ENCODE measurements at regions of chr20 and their contacts with region 1.

Region 1: GRCh38 chr20:44382641-44383040 is 27.1 kb downstream of the HNF4A start:
- DNase-seq: no peak
- ATAC-seq: no peak
- H3K4me3 ChIP-seq: no peak overlapping the region
- H3K27ac ChIP-seq: no peak overlapping the region
- H3K4me1 ChIP-seq: peaks cover under 1% of the 10 kb centered on the region; the same call in 1 of the 2 replicates
- H3K27me3 ChIP-seq: no peaks in the 10 kb centered on the region
- CTCF ChIP-seq: no peak

Region 2: DNA sequence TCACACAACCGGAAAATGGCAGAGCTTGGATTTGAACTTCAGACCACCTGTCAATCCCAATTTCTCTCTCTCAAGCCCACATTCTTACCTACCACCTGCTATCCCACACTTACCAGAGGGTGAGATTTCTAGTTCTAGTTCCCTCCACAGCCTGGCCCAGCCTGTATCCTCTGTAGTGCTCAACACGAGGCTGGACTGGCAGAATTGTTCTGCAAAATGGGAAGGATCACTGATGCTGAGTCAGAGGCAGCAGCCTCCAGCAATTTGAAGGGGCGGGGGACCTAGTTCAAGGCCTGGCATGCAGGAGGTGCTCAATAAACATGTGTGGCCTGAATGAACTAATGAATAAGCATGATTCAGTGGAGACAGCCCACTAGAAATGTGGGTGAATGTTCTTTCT is 39.4 kb after region 1 on chr20:
- CTCF ChIA-PET with region 1: no interaction called
- POLR2A ChIA-PET with region 1: no interaction called
- in situ Hi-C with region 1: no loop called
- intact Hi-C with region 1: no loop called
- DNase-seq: no peak
- ATAC-seq: no peak
- H3K4me3 ChIP-seq: no peak overlapping the region
- H3K27ac ChIP-seq: no peak overlapping the region
- H3K4me1 ChIP-seq: no peaks in the 10 kb centered on the region
- H3K27me3 ChIP-seq: no peaks in the 10 kb centered on the region; the same call in 1 of the 2 replicates
- CTCF ChIP-seq: no peak

Region 3: DNA sequence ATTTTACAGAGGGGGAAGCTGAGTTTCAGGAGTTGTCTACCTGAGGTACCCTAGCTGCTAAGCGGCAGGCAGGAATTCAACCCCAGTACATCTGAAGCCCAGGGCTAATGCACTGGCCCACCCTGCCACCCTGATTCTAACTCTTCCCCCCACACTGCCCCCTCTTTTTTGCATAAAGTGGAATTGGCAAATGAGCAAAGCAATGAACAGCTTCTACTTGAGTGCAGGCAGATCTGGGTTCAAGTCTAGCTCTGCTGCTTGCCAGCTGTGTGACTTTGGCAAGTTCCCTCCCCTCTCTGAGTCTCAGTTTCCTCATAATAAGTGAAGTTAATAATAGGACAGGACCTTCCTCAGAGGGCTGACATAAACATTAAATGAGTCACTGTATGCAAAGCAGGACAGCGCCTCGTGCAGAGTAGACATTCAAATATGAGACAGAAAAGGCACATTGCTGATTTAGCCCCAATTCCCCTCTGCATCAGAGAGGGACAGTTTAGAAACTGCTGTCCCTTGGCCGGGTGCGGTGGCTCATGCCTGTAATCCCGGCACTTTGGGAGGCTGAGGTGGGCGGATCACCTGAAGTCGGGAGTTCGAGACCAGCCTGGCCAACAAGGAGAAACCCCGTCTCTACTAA is 264.1 kb after region 1 on chr20:
- CTCF ChIA-PET with region 1: interaction called, 11 read pairs
- POLR2A ChIA-PET with region 1: no interaction called
- in situ Hi-C with region 1: no loop called
- intact Hi-C with region 1: no loop called
- DNase-seq: no peak
- ATAC-seq: no peak
- H3K4me3 ChIP-seq: no peak overlapping the region
- H3K27ac ChIP-seq: peak overlapping the region; percentile 49
- H3K4me1 ChIP-seq: peaks cover 56% of the 10 kb centered on the region
- H3K27me3 ChIP-seq: no peaks in the 10 kb centered on the region
- CTCF ChIP-seq: no peak